PC-3 (cell line): ENCODE measurements at regions of chr1 and their contacts with region 1.

Region 1: DNA sequence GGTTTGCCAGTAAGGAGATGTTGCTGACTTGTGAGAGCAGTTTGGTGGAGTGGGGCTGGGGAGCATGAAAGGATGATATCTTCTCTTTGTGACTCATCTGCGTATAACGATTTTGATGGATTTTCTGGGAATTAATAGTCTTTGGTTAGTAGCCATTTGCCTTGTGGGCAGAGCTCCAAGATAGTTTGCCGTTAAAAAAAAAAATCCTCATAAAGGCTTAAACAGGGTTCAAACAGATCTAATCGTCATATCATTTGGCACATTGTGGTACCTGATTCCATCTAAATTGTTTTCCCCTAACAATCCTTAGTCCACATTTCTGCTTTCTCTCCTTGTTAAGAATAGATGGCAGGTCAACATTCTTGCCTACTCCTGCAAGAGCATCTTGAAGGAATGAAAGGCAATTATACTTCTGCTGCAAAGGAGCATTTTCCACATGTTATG is 168.0 kb downstream of the PPP1R12B start:
- DNase-seq: no peak
- ATAC-seq: no peak
- H3K4me3 ChIP-seq: no peak overlapping the region
- H3K27ac ChIP-seq: no peak overlapping the region
- H3K4me1 ChIP-seq: no peaks in the 10 kb centered on the region
- H3K27me3 ChIP-seq: no peaks in the 10 kb centered on the region
- CTCF ChIP-seq: no peak

Region 2: DNA sequence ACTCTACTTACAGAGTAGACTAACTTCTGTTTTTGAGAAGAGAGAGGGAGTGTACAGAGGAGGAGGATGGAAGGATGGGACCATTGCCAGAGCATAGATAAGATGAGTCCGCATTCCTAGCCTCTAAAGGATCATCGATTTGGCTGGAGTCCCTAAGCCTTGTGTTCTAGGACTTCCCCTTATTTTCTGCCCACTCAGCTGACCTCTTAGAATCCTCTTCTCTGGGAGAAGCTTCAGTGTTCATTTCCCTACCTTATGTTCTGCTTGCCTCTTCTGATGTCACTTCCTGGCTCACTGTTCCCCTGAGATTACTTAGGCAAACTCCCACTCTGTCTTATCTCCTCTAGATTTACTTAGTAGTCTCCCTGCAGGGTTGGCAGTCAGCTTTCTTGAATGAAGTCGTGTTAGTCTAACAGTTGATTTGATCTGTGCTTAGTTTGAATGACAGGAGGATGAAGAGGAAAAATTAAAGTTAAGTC is 37.1 kb after region 1 on chr1:
- CTCF ChIA-PET with region 1: no interaction called
- POLR2A ChIA-PET with region 1: no interaction called
- intact Hi-C with region 1: loop called (anchors 5 kb)
- DNase-seq: no peak
- ATAC-seq: no peak
- H3K4me3 ChIP-seq: no peak overlapping the region
- H3K27ac ChIP-seq: no peak overlapping the region
- H3K4me1 ChIP-seq: peaks cover 4% of the 10 kb centered on the region; the same call in 1 of the 2 replicates
- H3K27me3 ChIP-seq: no peaks in the 10 kb centered on the region
- CTCF ChIP-seq: no peak

Region 3: GRCh38 chr1:202571347-202572339 is 55.2 kb after region 1 on chr1:
- CTCF ChIA-PET with region 1: no interaction called
- POLR2A ChIA-PET with region 1: no interaction called
- intact Hi-C with region 1: no loop called
- DNase-seq: peak; percentile 46
- ATAC-seq: no peak
- H3K4me3 ChIP-seq: no peak overlapping the region
- H3K27ac ChIP-seq: no peak overlapping the region
- H3K4me1 ChIP-seq: peaks cover 8% of the 10 kb centered on the region
- H3K27me3 ChIP-seq: no peaks in the 10 kb centered on the region
- CTCF ChIP-seq: peak; percentile 78